Activated CD4-positive, alpha-beta T cell treated with anti-CD3 and anti-CD28 coated beads, Interleukin-2, amount 10 ng/mL, durations not matched to agents 24 days and 14 days (primary cell): ENCODE measurements at regions of chr20 and their contacts with region 1.

Region 1: GRCh38 chr20:5056801-5057599 is 55.7 kb upstream of the SLC23A2 start:
- DNase-seq: peak; percentile 93
- H3K4me3 Mint-ChIP-seq: peak overlapping the region; percentile 41
- H3K27ac Mint-ChIP-seq: peak overlapping the region; percentile 81
- H3K4me1 Mint-ChIP-seq: peaks cover 25% of the 10 kb centered on the region
- H3K27me3 Mint-ChIP-seq: peaks cover 3% of the 10 kb centered on the region

Region 2: DNA sequence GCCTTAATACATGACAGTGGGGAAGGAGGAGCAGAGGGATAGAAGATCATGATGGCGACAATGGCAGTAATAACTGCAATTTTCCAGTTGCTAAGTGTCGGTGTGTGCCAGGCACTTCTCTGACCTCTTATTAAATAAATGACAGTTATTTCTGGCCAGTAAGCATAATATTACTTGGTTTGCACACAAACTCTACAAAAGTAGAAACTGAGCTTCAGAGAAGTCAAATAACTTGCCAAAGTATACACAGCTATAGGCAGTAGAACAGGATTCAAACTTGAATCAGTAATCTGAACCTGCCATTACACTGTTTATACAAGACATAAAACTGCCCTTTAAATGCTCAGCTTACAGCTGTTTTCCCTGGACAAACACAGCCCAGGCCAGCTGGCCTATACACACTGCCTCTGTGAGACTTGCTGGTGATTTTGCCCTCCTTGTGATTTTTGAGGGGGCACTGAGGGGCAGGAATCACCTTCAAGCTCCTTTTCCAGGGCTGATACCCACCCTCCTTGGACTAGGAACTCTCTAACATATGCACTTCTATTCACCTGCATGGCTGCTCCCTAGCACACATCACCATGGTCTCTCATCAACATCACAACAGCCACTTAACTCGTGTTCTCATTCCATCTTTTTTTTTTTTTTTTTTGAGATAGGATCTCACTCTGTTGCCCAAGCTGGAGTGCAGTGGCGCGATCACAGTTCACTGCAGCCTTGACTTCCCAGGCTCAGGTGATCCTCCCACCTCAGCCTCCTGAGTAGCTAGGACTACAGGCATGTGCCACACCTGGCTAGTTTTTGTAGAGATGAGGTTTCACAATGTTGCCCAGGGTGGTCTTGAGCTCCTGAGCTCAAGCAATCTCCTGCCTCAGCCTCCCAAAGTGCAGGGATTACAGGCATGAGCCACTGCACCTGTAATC is 119.3 kb before region 1 on chr20:
- intact Hi-C with region 1: no loop called
- DNase-seq: no peak
- H3K4me3 Mint-ChIP-seq: no peak overlapping the region
- H3K27ac Mint-ChIP-seq: no peak overlapping the region
- H3K4me1 Mint-ChIP-seq: peaks cover 5% of the 10 kb centered on the region
- H3K27me3 Mint-ChIP-seq: no peaks in the 10 kb centered on the region

Region 3: GRCh38 chr20:5001174-5002076 is 55.6 kb before region 1 on chr20 and contains the start of gene SLC23A2:
- intact Hi-C with region 1: loop called (anchors 5 kb)
- DNase-seq: peak; percentile 88
- H3K4me3 Mint-ChIP-seq: peak within 1 kb of the TSS; percentile 98
- H3K27ac Mint-ChIP-seq: peak within 1 kb of the TSS; percentile 96
- H3K4me1 Mint-ChIP-seq: peaks cover 35% of the 10 kb centered on the region
- H3K27me3 Mint-ChIP-seq: peaks cover 19% of the 10 kb centered on the region
- total RNA-seq, gene SLC23A2: 26.9 and 27.6 TPM in 2 replicates

Region 4: DNA sequence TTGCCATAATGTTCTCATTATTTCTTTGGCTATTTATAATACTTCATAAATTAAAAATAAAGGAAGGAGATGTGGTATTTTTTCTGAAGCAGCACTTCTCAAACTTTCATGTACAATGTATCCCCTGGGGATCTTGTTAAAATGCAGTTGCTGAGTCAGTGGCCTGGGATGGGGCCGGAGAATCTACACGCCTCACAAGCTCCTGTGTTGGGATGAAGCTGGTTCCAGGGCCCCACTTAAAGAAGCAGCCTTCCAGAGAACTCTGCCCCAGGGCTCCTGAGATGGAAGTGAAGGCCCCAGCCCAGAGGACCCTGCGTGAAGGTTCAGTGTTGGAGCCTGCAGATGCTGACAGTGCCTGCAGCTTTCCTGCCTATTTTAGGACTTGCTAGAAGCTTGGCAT is 15.6 kb before region 1 on chr20:
- intact Hi-C with region 1: no loop called
- DNase-seq: no peak
- H3K4me3 Mint-ChIP-seq: no peak overlapping the region
- H3K27ac Mint-ChIP-seq: no peak overlapping the region
- H3K4me1 Mint-ChIP-seq: peaks cover 6% of the 10 kb centered on the region
- H3K27me3 Mint-ChIP-seq: peaks cover 14% of the 10 kb centered on the region

Region 5: DNA sequence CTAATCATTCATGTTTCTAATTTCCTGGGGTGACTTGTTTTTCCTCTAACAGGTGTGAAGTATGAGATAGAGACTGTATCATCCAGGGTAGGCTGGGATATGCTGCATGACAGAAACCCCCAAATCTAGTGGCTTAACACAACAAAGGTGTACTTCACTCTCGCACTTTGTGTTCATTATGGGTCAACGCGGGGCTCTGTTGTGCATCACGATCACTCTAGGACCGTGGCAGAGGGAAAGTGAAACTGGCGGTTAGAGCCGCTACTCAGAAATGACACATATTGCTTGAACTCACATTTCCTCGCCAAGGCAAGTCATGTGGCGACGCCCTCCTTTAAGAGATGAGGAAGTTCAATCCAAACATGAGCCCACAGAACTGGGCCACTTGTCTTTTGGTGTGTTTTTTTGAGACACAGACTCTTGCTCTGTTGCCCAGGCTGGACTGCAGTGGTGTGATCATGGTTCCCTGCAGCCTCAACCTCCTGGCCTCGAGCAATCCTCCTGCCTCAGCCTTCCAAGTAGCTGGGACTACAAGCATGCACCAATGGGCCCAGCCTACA is 21.5 kb after region 1 on chr20:
- intact Hi-C with region 1: loop called (anchors 1 kb)
- DNase-seq: peak; percentile 95
- H3K4me3 Mint-ChIP-seq: peak overlapping the region; percentile 80
- H3K27ac Mint-ChIP-seq: peak overlapping the region; percentile 94
- H3K4me1 Mint-ChIP-seq: peaks cover 50% of the 10 kb centered on the region
- H3K27me3 Mint-ChIP-seq: no peaks in the 10 kb centered on the region

Region 6: DNA sequence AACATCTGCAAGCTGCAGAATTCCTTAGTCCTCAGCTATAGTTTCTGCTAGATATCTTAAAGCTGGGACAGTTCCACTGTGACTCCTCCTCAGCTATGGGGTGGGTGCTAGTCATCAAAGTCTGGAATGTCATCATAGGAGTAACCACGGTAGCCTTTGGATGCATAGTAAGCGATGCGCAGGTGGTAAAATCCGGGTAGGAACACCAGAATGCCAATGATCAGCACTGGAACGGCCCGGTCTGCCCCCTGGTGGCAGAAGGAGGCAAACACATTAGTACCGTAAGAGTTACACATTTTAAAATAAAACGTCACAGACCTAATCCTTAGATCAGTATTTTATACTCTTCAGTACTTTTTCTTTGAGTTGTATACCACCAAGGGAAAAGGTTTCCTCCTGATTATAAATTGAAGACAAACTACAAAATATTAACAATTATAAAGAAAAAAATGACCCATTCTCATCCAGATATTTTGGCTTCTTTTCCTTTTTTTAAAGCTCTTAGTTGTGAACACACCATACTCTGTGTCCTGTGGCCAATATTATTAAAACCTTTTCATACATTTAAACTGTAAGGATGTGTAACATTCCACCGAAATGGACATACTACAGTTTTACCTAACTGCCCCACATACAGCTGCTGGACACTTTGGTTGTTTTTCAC is 43.8 kb after region 1 on chr20:
- intact Hi-C with region 1: loop called (anchors 1 kb)
- DNase-seq: peak; percentile 92
- H3K4me3 Mint-ChIP-seq: no peak overlapping the region
- H3K27ac Mint-ChIP-seq: no peak overlapping the region
- H3K4me1 Mint-ChIP-seq: peaks cover 6% of the 10 kb centered on the region
- H3K27me3 Mint-ChIP-seq: no peaks in the 10 kb centered on the region

Region 7: GRCh38 chr20:5191829-5192569 is 135.0 kb after region 1 on chr20:
- intact Hi-C with region 1: loop called (anchors 1 kb)
- DNase-seq: peak; percentile 80
- H3K4me3 Mint-ChIP-seq: no peak overlapping the region
- H3K27ac Mint-ChIP-seq: peak overlapping the region; percentile 70
- H3K4me1 Mint-ChIP-seq: peaks cover 13% of the 10 kb centered on the region
- H3K27me3 Mint-ChIP-seq: no peaks in the 10 kb centered on the region

Region 8: GRCh38 chr20:5316188-5317158 is 259.5 kb after region 1 on chr20 and contains the start of gene PROKR2:
- intact Hi-C with region 1: no loop called
- DNase-seq: peak; percentile 59
- H3K4me3 Mint-ChIP-seq: peak within 1 kb of the TSS; percentile 58
- H3K27ac Mint-ChIP-seq: no peak within 1 kb of the TSS
- H3K4me1 Mint-ChIP-seq: peaks cover 2% of the 10 kb centered on the region
- H3K27me3 Mint-ChIP-seq: peaks cover 55% of the 10 kb centered on the region
- total RNA-seq, gene PROKR2: not detected in 2 replicates